Activated CD4-positive, alpha-beta T cell treated with anti-CD3 and anti-CD28 coated beads, Interleukin-2, amount 10 ng/mL, durations not matched to agents 24 days and 14 days (primary cell): ENCODE measurements at regions of chr2 and their contacts with region 1.

Region 1: GRCh38 chr2:171798252-171798741 is 95.7 kb downstream of the SLC25A12 start:
- DNase-seq: peak; percentile 52
- H3K4me3 Mint-ChIP-seq: no peak overlapping the region
- H3K27ac Mint-ChIP-seq: peak overlapping the region; percentile 75
- H3K4me1 Mint-ChIP-seq: peaks cover 28% of the 10 kb centered on the region
- H3K27me3 Mint-ChIP-seq: no peaks in the 10 kb centered on the region

Region 2: GRCh38 chr2:170836027-170836426 is 962.3 kb before region 1 on chr2:
- intact Hi-C with region 1: no loop called
- DNase-seq: no peak
- H3K4me3 Mint-ChIP-seq: no peak overlapping the region
- H3K27ac Mint-ChIP-seq: no peak overlapping the region
- H3K4me1 Mint-ChIP-seq: no peaks in the 10 kb centered on the region
- H3K27me3 Mint-ChIP-seq: peaks cover 4% of the 10 kb centered on the region

Region 3: DNA sequence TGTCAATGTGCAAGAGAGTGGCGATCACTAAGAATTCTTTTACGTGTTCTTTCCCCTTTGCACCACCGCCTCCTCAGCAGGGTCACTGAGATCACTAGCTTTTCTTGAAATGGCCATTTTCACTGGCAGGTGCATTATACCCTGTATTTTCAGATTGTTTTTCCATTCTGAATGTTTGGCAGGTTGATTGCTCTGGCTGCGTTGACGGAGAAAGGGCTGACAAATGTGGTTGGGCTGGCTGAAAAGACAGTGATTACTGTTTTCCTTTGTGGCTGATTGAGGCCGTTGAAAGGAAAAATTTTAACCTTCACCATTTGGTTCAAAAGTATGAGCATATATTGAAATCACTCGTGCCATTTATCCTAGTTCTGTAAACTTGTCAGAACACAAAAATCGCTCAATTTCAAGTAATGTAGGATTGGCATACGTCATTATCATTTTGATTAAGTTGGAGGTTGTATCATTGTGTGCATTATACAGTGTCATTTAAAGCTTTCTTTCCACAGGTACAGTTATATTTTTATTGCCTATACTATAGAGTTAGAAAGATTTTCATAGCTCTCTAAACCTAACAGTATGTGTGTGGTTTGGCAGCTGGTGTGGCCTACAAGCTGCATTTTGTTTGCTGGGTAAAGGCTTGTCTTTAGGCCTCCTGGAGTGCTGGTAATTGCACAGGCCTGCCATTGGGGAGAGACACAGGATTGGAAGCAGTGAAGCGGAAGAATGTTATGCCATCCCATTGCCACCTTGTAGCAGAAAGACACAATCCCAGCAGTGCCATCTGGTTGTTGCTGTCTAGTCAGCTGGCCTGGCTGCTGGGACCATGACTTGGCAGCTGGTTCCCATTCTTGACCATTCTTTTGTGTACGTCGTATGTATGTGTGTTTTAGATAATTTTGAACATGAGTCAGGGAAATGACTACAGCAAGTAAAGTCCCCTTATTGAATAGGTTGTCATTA is 74.3 kb before region 1 on chr2:
- intact Hi-C with region 1: loop called (anchors 10 kb)
- DNase-seq: no peak
- H3K4me3 Mint-ChIP-seq: no peak overlapping the region
- H3K27ac Mint-ChIP-seq: no peak overlapping the region
- H3K4me1 Mint-ChIP-seq: no peaks in the 10 kb centered on the region
- H3K27me3 Mint-ChIP-seq: no peaks in the 10 kb centered on the region